Right ventricle myocardium inferior (tissue), 1 donor: ENCODE measurements at regions of chr4 and their contacts with region 1.

Region 1: DNA sequence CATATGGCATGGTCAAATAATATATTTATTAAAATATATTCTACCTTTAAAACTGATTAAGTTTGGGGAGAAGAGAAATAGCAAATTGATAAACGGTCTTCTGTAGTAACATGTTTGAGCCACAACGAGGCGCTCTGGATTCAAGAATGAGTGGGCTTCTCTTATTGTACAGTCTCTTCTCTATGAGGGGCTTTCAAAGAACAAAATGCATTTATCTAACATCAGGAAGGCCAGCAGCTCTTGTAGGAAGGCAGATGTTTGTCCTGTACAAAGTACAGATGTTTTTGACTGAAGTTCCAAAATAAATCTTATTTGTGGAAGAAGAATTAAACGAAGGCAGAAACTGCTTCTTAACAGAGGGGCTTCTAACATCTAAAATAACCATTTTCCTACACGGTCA is 153.6 kb downstream of the RASL11B start:
- DNase-seq: no peak
- ATAC-seq: no peak

Region 2: DNA sequence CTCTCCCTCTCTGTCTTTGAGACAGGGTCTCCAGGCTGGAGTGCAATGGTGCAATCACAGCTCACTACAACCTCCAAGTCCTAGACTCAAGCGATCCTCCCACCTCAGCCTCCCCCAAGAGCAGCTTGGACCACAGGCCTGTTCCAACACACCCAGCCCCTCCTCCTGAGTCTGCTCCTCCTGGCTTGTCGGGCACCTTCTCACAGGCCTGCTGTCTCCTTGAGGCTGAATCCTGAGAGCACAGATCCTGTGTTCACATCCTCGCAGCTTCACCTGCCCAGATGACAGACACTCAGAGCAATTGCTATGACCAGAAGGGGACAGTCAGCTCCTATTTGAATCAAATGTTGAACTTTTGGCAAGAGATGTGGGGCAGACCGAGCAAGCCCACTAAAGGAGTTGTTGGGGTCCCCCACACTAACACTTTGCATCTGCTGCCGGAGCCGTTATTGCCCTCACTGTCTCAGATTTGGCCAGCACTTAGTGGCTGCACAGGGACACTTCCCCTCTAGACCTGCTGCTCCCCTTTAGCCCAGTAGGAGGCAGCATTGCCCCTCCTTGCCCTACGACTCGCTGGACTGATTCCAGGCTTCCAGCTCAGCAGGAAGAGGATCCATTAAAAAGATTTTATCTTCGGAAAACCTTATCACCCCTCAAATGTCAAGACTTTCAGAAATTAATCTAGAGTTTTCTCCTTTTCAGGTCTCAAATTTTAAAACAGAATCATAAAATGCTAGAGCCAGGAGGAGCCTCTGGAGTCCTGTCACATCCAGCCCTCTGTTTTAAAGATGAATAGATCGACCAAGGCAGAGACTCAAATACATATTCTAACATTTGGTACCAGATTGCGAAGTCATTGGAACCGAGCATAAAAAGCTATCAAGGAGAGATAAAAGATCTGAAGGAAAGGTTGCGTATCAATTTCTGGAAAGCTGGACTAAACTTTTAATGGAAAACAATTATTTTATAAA is 470.3 kb before region 1 on chr4:
- intact Hi-C with region 1: no loop called
- DNase-seq: peak; percentile 75
- ATAC-seq: peak; percentile 84

Region 3: GRCh38 chr4:53055274-53055673 is 39.6 kb after region 1 on chr4:
- intact Hi-C with region 1: no loop called
- DNase-seq: no peak
- ATAC-seq: peak; percentile 11

Region 4: GRCh38 chr4:53119680-53120079 is 104.0 kb after region 1 on chr4:
- intact Hi-C with region 1: loop called (anchors 10 kb)
- DNase-seq: no peak
- ATAC-seq: peak; percentile 61

Region 5: DNA sequence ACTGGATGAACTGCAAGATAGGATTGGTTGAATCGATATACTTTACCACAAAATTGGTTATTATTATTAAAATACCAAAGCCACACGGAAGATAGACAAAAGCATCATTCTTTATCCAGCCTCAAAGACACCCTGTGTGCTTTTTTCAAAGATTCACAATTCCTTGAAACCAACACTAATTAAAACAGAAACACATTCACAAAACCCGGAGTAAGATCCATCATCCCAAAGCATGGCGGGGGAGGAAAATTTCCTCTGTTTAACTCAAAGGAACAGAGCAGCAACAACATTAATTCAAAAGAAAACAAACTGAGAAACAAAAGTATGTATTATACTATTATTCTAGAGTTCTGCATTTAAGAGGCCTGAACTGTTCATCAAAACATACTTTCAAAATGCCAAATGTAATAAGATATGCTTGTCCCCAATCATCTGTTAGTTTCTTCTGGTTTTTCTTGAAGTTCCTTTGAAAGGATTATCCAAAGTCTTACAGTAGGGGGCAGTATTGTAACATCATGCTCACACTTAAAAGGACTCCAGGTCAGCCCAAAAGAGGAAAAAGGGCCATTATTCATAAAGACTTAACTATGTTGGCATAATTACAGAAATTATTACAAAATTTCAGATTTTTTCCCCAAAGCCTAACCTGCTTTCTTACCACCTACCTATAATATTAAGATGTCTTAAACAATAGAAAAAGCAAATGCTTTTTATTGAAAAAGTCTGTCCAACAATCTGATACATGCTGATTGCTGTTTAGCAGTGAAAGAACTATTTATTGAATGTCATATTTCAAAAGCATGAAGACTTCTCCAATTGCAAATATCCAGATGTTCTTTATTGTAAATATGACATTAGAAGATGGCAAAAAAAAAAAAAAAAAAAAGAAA is 181.4 kb after region 1 on chr4:
- intact Hi-C with region 1: loop called (anchors 5 kb)
- DNase-seq: no peak
- ATAC-seq: peak; percentile 57

Region 6: DNA sequence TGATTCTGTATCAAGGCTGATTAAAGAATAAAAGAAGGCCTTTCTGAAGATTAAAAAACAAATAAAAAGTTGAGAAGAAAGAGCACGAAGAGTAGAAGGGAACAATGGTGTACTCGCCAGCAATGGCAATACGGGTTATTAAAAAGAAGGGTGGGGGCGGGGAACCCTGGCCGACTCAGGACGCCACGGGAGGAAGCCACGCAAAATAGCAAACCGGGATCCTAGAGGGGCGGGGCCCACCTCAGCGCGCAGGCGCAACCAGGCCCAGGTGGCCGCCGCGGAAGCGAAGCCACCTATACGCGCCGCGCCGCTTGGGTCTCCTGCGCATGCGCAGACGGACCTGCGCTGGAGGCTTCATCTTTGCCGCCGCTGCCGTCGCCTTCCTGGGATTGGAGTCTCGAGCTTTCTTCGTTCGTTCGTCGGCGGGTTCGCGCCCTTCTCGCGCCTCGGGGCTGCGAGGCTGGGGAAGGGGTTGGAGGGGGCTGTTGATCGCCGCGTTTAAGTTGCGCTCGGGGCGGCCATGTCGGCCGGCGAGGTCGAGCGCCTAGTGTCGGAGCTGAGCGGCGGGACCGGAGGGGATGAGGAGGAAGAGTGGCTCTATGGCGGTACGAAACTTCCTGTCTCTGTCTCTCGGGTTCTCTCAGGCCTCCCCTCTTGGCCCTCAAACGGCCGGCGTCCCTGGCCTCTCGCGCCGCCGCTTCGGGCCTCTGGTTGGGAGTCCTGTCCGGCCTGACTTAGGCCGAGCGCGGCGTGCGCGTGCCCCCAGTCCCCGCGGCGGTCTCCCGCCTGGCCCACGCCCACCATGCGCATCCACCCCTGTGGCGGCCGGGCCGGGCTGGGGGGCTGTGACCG is 361.9 kb after region 1 on chr4 and contains the start of gene FIP1L1:
- intact Hi-C with region 1: loop called (anchors 5 kb)
- DNase-seq: peak; percentile 98
- ATAC-seq: peak; percentile 99
- total RNA-seq, gene FIP1L1: 26.0 TPM

Region 7: GRCh38 chr4:53908661-53909078 is 893.0 kb after region 1 on chr4:
- intact Hi-C with region 1: loop called (anchors 10 kb)
- DNase-seq: no peak
- ATAC-seq: peak; percentile 91

Region 8: GRCh38 chr4:54217642-54218495 is 1202.2 kb after region 1 on chr4:
- intact Hi-C with region 1: loop called (anchors 5 kb)
- DNase-seq: peak; percentile 83
- ATAC-seq: peak; percentile 97

Region 9: GRCh38 chr4:54233277-54233696 is 1217.6 kb after region 1 on chr4:
- intact Hi-C with region 1: loop called (anchors 2 kb)
- DNase-seq: peak; percentile 91
- ATAC-seq: peak; percentile 81